Sigmoid colon (tissue), 7 donors: ENCODE measurements at regions of chr12 and their contacts with region 1.

Region 1: DNA sequence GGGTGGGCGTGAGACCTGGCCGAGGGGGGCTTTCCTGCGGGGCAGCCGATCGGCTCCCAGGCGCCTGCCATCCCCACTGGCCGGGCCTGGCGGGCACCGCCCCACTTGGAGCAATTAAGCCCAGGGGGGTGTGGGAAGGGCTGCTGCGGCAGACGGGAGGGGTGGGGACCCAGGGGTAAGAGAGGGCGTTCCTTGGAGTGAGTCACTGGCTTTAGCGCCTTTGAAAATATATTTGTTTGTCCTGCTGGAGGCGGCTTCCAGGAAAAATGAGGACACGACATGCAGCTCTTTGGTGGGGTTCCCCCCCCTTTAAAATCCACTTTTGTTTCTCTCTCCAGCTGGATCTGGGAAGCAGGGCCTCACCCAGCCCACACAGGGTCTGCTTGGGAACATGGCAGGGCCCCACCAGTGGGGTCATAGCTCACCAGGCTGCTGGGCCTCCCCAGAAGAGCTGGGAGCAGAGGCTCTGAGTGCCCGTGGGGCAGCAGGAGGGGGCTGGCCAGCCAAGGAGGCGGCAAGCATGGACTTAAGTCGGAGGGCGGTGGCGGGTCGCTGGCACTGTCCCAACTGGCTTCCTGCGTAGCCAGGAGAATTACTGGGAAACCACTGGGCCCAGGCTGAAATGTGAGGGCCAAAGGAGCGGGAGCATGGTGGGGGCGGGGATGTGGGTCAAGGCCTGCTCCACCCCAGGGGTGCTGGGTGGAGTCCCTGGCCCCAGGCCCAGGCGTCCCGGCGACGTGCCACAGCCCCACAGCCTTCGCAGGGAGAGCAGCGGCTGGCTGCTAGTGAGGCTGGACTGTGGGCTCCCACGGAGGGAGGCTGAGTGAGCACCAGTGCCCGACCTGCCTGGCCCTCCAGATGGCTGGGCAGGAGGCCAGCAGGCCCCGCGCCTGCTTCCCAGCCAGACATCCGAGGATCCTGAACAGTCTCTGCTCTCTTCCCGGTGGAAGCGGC is 128.0 kb downstream of the RFLNA start:
- DNase-seq: peak; percentile 97
- H3K4me3 ChIP-seq: peak overlapping the region in 3 of 4 donors; percentile 12 to 26 (median 20)
- H3K27ac ChIP-seq: peak overlapping the region; percentile 87 to 98 (median 96)
- H3K4me1 ChIP-seq: peaks cover 0 to 81% (median 71%) of the 10 kb centered on the region in 4 donors
- H3K27me3 ChIP-seq: no peaks in the 10 kb centered on the region
- CTCF ChIP-seq: peak in 1 of 4 experiments; percentile 10
- EP300 ChIP-seq: peak in 2 of 4 donors; percentile 52 to 70
- POLR2A ChIP-seq: no peak

Region 2: DNA sequence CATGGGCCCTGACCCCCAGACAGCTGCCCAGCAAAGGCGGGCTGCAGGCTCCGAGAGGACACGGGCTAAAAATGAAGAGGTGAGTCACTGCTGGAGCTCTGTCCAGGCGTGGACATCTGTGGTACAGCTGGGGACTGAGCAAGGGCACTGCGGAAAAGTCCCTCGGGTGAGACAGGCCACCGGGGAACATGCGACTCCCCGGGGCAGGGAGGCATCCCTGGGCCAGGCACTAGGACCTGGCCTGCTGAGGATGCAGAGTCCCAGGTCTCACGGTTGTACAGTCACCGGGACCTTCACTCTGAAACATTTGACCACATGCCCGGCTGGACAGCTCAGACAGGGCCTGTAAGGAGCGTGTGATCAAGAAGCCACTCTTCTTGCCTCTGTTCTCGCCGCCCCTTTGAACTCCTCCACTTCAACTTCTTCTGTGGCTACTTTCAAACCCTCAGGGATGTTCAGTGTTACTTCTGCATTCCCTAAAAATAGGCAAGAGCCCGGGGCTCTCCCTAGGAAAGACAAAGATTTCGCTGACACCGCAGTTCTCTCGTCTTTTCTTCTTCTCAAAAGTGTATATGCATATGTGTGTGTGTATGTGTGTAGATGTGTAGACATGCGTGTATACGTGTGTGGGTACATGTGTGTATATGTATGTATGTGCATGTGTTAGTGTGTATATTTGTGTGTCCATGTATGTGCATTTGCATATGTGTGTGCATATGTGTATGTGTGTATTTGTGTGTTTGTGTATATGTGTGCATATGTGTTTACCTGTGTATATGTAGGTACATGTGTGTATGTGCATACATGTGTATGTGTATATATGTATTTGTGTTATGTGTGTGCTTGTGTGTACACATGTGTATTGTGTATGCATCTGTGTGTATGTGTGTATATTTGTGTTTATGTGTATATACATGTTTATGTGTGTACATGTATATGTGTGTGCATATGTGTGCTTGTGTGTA is 132.9 kb before region 1 on chr12:
- intact Hi-C with region 1: no loop called
- DNase-seq: peak; percentile 63
- H3K4me3 ChIP-seq: peak overlapping the region in 2 of 4 donors; percentile 28 to 30
- H3K27ac ChIP-seq: peak overlapping the region in 1 of 4 donors; percentile 28
- H3K4me1 ChIP-seq: peaks cover 0 to 16% (median 13%) of the 10 kb centered on the region in 4 donors
- H3K27me3 ChIP-seq: peaks cover 0 to 4% (median 0%) of the 10 kb centered on the region in 3 donors
- CTCF ChIP-seq: no peak
- EP300 ChIP-seq: no peak
- POLR2A ChIP-seq: no peak

Region 3: DNA sequence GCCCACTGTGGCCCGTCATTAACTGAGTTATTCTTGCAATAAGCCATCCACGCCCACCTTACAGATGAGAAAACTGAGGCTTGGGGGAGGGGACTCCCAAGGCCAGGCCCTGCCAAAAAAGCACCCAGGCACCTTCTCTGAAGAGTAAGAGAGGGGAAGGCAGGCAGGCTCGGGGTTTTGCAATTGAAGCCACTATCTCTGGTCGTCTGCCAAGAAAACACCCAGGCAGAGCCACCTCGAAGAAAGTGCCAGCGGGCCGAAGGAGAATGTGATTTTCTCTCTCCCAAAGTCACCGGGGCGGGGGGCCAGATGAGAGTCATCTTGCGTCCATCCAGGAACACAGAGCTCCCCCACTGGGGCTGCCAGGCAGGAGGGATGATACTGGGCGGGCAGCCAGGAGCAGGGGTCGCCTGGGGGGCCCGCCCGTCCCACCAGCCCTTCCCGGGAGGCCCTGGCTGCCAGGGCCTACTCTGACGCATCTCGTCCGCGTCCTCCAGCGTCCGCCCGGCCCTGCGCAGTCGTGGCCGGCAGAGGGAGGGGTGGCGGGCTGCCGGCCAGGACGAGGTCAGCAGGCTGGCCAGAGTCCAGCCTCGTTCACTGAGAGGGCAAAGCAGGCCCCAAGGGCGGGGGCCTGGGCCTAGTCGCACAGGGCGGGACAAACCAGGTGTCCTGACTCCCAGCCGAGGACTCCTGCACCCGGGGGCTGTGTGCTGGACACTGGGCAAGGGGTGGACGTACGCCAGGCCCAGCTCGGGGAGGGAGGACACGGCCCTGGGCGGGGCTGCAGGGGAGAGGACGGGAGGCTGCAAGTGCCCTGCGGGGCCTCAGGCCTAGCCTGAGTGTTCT is 53.6 kb before region 1 on chr12:
- intact Hi-C with region 1: loop called (anchors 2 kb)
- DNase-seq: peak; percentile 97
- H3K4me3 ChIP-seq: peak overlapping the region in 2 of 4 donors; percentile 2 to 12
- H3K27ac ChIP-seq: peak overlapping the region; percentile 88 to 97 (median 92)
- H3K4me1 ChIP-seq: peaks cover 0 to 65% (median 63%) of the 10 kb centered on the region in 4 donors
- H3K27me3 ChIP-seq: no peaks in the 10 kb centered on the region
- CTCF ChIP-seq: peak; percentile 53 to 56 (median 53)
- EP300 ChIP-seq: peak in 3 of 4 donors; percentile 47 to 78 (median 52)
- POLR2A ChIP-seq: peak in 1 of 2 donors; percentile 12

Region 4: GRCh38 chr12:124379938-124380754 is 42.7 kb before region 1 on chr12:
- intact Hi-C with region 1: loop called (anchors 2 kb)
- DNase-seq: peak; percentile 94
- H3K4me3 ChIP-seq: no peak overlapping the region
- H3K27ac ChIP-seq: peak overlapping the region; percentile 94 to 99 (median 96)
- H3K4me1 ChIP-seq: peaks cover 0 to 64% (median 53%) of the 10 kb centered on the region in 4 donors
- H3K27me3 ChIP-seq: no peaks in the 10 kb centered on the region
- CTCF ChIP-seq: peak; percentile 65 to 71 (median 68)
- EP300 ChIP-seq: peak in 2 of 4 donors; percentile 1 to 21
- POLR2A ChIP-seq: no peak